ENCODE measurements at regions of chr6 and their contacts with region 1.

Region 1: DNA sequence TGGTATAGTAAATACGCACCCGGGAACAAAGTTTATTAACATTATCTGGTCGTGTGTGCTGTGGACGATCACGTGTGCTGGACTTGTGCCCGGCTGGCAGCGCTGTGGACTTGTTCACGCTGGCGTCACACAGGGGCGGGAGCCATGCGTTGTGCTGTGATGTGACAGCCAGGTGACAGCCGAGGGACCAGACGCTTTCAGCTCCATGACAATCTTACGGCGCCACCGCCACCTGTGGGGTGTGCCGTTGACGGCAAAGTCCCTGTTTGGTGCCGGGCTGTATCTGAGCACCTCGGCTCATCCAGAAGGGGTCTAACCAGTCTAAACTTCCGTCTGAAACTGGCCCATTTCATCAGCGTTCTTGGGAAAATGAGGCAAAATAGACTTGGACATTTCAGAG is 25.2 kb downstream of the DLL1 start:
- DNase-seq: peak; percentile 19 to 90 (median 82)
- H3K4me3 ChIP-seq: peak overlapping the region in 51 of 59 donors; percentile 3 to 60 (median 28)
- H3K27ac ChIP-seq: peak overlapping the region; percentile 2 to 98 (median 91)
- H3K27me3 ChIP-seq: no peaks in the 10 kb centered on the region
- CTCF ChIP-seq: peak in 2 of 56 donors; percentile 5 to 13

Region 2: GRCh38 chr6:170286246-170286933 is 20.7 kb after region 1 on chr6:
- intact Hi-C with region 1: loop called (anchors 2 kb)
- DNase-seq: peak in 9 of 10 donors; percentile 67 to 90 (median 76)
- H3K4me3 ChIP-seq: peak overlapping the region in 37 of 59 donors; percentile 9 to 92 (median 78)
- H3K27ac ChIP-seq: peak overlapping the region in 57 of 59 donors; percentile 26 to 98 (median 86)
- H3K27me3 ChIP-seq: peaks cover 0 to 23% (median 2%) of the 10 kb centered on the region in 45 donors
- CTCF ChIP-seq: peak in 1 of 56 donors; percentile 20